ENCODE measurements at regions of chr3 and their contacts with region 1.

Region 1: GRCh38 chr3:120348981-120349818 is at the start of gene LRRC58:
- DNase-seq: peak; percentile 93
- ATAC-seq: peak; percentile 88
- H3K4me3 Mint-ChIP-seq: peak within 1 kb of the TSS; percentile 91
- H3K27ac Mint-ChIP-seq: peak within 1 kb of the TSS; percentile 94
- H3K4me1 Mint-ChIP-seq: peaks cover 43% of the 10 kb centered on the region
- H3K27me3 Mint-ChIP-seq: peaks cover 2% of the 10 kb centered on the region
- total RNA-seq, gene LRRC58: 20.7 to 22.2 TPM

Region 2: DNA sequence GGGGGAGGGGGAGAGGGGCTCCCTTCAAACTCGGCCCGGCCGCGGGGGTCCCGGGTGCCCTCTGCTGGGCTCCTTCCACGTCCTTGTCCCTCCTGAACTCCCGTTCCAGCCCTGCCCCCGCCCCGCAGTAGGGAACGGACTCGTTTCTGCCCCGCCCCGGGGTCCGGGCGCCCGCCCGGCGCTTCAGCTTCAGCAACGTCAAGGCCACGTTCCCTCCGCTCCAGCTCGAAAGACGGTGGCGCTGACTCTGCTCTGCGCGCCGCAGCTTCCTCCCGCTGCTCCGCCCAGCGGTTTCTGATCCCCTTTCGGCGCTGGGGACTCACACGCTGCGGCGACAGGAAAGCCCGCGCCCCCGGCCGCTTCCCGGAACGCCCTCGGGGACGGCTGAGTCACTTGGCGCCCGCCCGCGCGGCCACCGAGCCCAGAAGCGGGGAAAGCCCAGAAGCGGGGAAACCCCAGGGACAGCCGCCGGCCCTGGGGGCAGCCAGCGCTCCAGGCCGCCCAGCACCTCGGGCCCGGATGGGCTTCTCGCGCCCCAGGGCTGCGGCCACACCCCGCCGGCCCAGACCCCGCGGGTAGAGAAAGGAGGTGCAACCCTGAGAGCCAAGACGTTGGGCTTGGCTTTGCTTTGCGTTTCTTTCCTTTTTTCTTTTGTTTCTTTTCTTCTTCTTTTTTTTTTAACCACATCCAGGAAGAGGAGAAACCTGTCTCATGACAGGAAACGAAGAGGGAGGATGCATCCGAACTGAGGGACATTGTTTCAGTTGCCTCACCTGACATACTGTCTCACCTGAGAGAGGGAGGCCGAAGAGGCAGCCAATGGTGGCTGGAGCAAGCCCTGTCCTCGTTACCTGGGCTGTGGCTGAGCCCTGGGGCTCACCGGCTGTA is 1026.1 kb before region 1 on chr3:
- CTCF ChIA-PET with region 1: no interaction called
- POLR2A ChIA-PET with region 1: no interaction called
- intact Hi-C with region 1: loop called (anchors 1 to 10 kb)
- DNase-seq: peak; percentile 97
- ATAC-seq: peak; percentile 92
- H3K4me3 Mint-ChIP-seq: peak overlapping the region; percentile 83
- H3K27ac Mint-ChIP-seq: peak overlapping the region; percentile 87
- H3K4me1 Mint-ChIP-seq: peaks cover 46% of the 10 kb centered on the region
- H3K27me3 Mint-ChIP-seq: no peaks in the 10 kb centered on the region

Region 3: DNA sequence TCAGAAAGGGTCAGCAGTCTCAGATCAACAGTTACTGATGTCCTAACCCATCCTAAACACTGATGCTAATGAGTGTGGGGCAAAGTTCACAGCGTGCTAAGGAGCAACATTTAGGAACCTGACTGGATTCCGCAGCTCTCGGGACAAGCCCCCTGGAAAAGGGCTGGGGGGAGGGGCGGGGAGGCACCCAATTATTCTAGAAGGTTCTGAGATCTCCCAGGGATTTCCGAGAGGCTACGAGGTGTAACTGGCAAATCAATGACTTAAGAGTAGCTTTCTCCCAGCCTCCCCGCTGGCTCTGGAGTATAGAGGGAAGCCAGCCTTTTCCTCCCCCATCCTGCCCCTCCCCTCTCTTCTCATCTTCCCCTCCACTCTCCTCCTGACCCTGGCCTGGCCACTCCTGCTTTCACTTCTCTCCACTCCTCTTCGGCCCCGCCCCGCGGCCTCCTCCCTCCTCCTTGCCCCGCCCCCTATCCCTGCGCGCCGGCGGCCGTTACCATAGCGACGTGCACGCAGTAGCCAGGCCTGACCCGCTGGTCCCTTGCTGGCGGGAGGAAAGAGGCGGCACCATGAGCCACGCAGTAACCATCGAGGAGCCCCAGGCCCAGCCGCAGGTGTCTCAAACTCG is 646.6 kb before region 1 on chr3 and contains the start of gene CFAP91:
- CTCF ChIA-PET with region 1: no interaction called
- POLR2A ChIA-PET with region 1: no interaction called
- intact Hi-C with region 1: loop called in 1 of 2 experiments (anchors 2 kb)
- DNase-seq: peak; percentile 90
- ATAC-seq: peak; percentile 86
- H3K4me3 Mint-ChIP-seq: peak within 1 kb of the TSS; percentile 67
- H3K27ac Mint-ChIP-seq: peak within 1 kb of the TSS; percentile 59
- H3K4me1 Mint-ChIP-seq: peaks cover 39% of the 10 kb centered on the region
- H3K27me3 Mint-ChIP-seq: peaks cover 5% of the 10 kb centered on the region
- total RNA-seq, gene CFAP91: 0.25 to 0.67 TPM

Region 4: GRCh38 chr3:119918992-119919933 is 429.9 kb before region 1 on chr3:
- CTCF ChIA-PET with region 1: no interaction called
- POLR2A ChIA-PET with region 1: no interaction called
- intact Hi-C with region 1: loop called (anchors 5 to 10 kb)
- DNase-seq: no peak
- ATAC-seq: peak; percentile 63
- H3K4me3 Mint-ChIP-seq: no peak overlapping the region
- H3K27ac Mint-ChIP-seq: no peak overlapping the region
- H3K4me1 Mint-ChIP-seq: peaks cover 17% of the 10 kb centered on the region
- H3K27me3 Mint-ChIP-seq: no peaks in the 10 kb centered on the region

Region 5: DNA sequence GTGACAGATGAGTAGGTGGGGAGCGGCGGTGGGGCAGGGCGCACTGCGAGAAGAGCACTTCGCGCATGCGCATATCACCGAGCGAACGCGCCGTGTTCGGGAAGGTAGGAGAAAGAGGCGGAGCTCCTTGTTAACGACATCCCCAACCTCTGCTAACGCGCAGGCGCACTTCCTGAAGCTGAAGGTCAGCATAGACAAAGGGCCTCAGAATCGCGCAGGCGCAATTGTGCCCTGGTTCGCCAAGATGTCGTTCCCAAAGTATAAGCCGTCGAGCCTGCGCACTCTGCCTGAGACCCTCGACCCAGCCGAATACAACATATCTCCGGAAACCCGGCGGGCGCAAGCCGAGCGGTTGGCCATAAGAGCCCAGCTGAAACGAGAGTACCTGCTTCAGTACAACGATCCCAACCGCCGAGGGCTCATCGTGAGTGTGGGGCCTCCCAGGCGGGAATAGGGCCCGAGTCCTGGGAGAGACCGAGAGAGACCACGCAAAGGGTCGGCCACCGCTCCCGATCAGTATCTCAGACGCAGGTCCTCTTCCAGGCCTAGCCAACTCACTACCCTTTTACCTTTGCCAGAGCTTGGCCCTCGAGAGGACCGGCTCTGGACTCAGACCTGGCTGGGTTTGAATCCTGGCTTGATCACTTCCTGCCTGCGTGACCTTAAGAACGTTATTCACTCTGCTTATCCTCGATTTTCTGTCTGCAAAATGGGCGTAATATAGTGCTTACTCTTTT is 247.1 kb after region 1 on chr3 and contains the start of gene NDUFB4:
- CTCF ChIA-PET with region 1: no interaction called
- POLR2A ChIA-PET with region 1: interaction called, 3 read pairs
- intact Hi-C with region 1: loop called (anchors 1 to 10 kb)
- DNase-seq: peak; percentile 98
- ATAC-seq: peak; percentile 94
- H3K4me3 Mint-ChIP-seq: no peak within 1 kb of the TSS
- H3K27ac Mint-ChIP-seq: peak within 1 kb of the TSS; percentile 94
- H3K4me1 Mint-ChIP-seq: peaks cover 10% of the 10 kb centered on the region
- H3K27me3 Mint-ChIP-seq: no peaks in the 10 kb centered on the region
- total RNA-seq, gene NDUFB4: 157 to 186 TPM